ENCODE measurements at regions of chr11 and their contacts with region 1.

Region 1: DNA sequence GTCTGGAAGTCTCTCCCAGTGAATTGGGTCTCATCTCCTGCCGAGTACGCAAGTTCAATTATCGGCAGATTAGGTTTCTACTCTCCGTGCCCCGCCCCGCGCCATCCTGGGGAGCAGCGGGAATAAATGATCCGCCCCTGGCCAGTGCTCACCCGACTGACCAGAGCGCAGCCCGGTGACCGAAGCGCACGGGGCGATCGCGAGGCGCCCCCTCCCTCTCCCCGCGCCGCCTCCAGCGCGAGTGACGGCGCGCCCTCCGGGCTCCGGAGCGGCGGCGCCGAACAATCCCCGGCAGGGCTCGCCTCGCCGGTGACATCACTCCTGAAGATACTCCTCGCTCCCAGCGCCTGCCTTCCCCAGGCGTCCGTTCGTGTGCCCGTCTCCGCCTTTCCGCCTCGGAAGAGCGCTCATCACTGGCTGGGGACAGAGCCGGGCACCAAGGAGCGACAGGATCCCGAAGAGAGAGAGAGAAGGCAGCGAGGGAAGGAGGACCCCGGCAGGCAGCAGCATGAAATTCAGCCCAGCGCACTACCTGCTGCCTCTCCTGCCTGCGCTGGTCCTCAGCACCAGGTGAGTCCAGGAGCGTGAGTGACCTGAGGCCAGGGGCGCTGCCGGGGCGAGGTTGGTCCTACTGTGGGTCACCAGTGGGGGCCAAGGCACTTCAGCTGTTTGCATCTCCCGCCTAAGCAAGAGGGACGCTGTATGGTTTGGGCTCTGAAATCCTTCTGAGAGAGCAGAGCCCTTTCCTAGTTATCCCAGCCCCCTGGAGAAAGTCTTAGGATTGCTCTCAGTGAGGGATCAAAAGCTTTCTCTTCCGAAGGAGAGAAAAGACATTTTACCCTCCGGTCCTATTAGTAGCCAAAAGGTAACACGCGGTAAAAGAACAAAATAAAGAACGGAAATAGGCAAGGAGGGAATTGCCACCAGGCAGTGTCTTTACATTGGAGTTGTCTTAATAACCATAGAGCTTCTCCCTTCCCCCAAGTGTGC is at the start of gene LUZP2:
- DNase-seq: peak; percentile 51
- ATAC-seq: peak; percentile 96
- H3K4me3 ChIP-seq: peak within 1 kb of the TSS; percentile 61
- H3K27ac ChIP-seq: peak within 1 kb of the TSS; percentile 2; the same call in 1 of the 2 replicates
- H3K4me1 ChIP-seq: no peaks in the 10 kb centered on the region; the same call in 1 of the 2 replicates
- H3K27me3 ChIP-seq: no peaks in the 10 kb centered on the region
- CTCF ChIP-seq: no peak
- POLR2A ChIP-seq: no peak
- RAD21 ChIP-seq: no peak; the same call in 1 of the 2 replicates
- total RNA-seq, gene LUZP2: 2.0 and 2.2 TPM in 2 replicates

Region 2: DNA sequence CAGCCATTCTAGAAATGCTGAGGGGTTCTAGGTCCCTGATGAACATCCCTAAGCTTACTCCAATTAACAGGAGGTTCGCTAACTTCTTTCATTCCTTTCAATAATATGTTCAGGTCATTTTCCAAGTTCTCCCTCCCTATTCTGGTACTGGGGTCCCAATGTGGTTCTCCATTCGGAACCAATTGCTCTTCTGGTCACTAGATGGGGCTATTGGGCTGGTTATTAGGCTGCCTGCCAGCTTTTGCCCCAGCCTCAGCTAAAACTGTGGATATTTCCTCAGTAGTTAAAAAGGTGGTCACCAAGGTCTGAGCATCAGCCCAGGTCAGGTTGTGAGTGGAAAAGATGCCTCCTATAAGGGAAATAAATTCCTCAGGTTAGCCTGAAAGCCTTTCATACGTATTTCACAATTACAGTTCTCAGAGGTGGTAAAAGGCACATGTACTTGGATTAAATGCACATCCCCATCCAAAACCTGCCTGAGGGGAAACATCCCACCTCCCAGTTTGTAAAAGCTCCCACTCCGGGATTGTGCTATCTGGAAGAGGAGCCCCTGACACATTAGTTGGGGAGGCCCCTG is 1475.7 kb before region 1 on chr11:
- CTCF ChIA-PET with region 1: no interaction called
- POLR2A ChIA-PET with region 1: no interaction called
- dilution Hi-C with region 1: no loop called
- in situ Hi-C with region 1: no loop called
- intact Hi-C with region 1: loop called (anchors 10 kb)
- DNase-seq: peak; percentile 51
- ATAC-seq: peak; percentile 86
- H3K4me3 ChIP-seq: no peak overlapping the region
- H3K27ac ChIP-seq: no peak overlapping the region
- H3K4me1 ChIP-seq: 0 out of 2 replicates have a peak, but pooled peaks cover 3% of the 10 kb centered on the region
- H3K27me3 ChIP-seq: no peaks in the 10 kb centered on the region
- CTCF ChIP-seq: peak; percentile 81
- POLR2A ChIP-seq: 0 out of 2 replicates have a peak, but pooled peaks have one; percentile 27
- RAD21 ChIP-seq: peak; percentile 85

Region 3: DNA sequence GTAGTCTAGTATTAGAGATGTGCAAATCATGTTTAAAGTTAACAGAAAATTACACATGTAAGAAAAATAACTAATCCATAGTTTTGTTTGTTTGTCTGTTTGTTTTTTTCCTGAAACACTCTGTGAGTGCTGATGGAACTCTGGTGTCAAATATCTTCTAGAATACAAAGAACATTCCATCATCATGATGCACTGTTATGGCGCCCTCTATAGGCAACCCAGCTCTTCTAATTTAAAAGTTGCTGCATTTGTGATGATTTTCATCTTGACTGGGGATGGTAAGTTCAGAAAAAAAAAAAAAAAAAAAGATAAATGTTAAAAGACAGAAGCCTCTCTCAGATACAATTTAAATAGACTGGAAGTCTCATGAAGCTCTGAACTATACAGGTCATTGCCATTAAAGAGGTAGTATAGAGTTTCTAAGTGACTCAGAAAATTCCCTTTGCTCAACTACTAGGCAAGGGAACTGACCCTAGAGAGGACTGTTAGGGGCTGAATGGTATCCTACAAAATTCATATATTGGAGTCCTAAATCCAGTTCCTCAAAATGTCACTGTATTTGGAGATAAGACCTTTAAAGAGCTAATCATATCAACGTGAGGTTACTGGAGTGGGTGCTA is 1237.7 kb after region 1 on chr11:
- CTCF ChIA-PET with region 1: no interaction called
- POLR2A ChIA-PET with region 1: no interaction called
- dilution Hi-C with region 1: no loop called
- in situ Hi-C with region 1: no loop called
- intact Hi-C with region 1: loop called (anchors 5 kb)
- DNase-seq: peak; percentile 19
- ATAC-seq: 0 out of 2 replicates have a peak, but pooled peaks have one; percentile 40
- H3K4me3 ChIP-seq: no peak overlapping the region
- H3K27ac ChIP-seq: no peak overlapping the region
- H3K4me1 ChIP-seq: no peaks in the 10 kb centered on the region
- H3K27me3 ChIP-seq: no peaks in the 10 kb centered on the region
- CTCF ChIP-seq: peak; percentile 32
- POLR2A ChIP-seq: no peak
- RAD21 ChIP-seq: 0 out of 2 replicates have a peak, but pooled peaks have one; percentile 24

Measured in IMR-90 (cell line).